ENCODE measurements at regions of chr19 and their contacts with region 1.

Region 1: DNA sequence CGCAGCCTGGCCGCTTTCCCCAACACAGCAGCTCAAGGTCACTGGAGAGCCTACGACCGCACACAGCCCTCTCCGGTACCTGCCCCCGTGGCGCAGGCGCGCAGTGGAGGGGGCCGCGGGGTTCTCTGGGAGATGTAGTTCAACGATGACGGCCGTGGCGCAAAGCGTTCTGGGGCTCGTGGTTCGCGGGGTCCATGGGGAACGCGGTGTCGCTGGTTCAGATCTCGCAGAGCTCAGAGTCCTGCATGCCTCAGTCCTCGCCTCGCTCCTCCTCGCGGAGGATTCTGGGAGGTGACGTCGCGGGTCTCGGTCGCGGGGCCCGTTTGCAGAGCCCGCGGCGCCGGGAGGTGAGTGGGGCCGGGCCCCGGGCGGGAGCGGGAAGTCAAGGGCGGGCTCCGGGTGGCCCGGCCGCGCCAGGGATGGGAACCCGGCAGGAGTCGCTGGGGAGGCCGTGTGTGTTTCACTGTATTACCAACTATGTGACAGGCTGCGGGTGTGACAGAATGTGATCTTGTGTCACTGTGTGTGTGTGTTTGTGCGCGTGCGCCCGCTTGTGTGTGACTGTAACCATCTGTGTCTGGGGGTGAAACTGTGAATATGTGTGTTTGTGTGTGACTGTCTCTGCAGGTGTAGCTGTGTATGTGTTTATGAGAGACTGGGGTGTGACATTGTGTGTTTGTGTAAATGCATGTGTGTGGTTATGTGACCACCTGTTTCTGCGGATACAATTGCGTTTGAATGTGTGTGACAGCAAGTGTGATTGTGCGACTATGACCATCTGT is at the start of gene ZNF527:
- DNase-seq: peak; percentile 97 to 100 (median 99)
- H3K4me3 ChIP-seq: peak within 1 kb of the TSS; percentile 61 to 99 (median 83)
- H3K27ac ChIP-seq: peak within 1 kb of the TSS; percentile 66 to 96 (median 89)
- H3K27me3 ChIP-seq: no peaks in the 10 kb centered on the region
- CTCF ChIP-seq: peak in 36 of 56 donors; percentile 5 to 52 (median 29)
- total RNA-seq, gene ZNF527: 8.0 to 20.0 (median 11.8) TPM

Region 2: GRCh38 chr19:36850559-36851442 is 520.3 kb before region 1 on chr19 and contains the start of gene ZNF345:
- intact Hi-C with region 1: loop called in 1 of 2 experiments (anchors 2 kb)
- DNase-seq: peak; percentile 80 to 95 (median 94)
- H3K4me3 ChIP-seq: peak within 1 kb of the TSS; percentile 63 to 99 (median 89)
- H3K27ac ChIP-seq: peak within 1 kb of the TSS; percentile 79 to 98 (median 94)
- H3K27me3 ChIP-seq: no peaks in the 10 kb centered on the region
- CTCF ChIP-seq: peak in 7 of 56 donors; percentile 5 to 17 (median 10)
- total RNA-seq, gene ZNF345: 4.2 to 23.2 (median 10.2) TPM

Region 3: GRCh38 chr19:37014456-37014855 is 356.6 kb before region 1 on chr19:
- intact Hi-C with region 1: no loop called
- DNase-seq: no peak
- H3K4me3 ChIP-seq: no peak overlapping the region
- H3K27ac ChIP-seq: no peak overlapping the region
- H3K27me3 ChIP-seq: no peaks in the 10 kb centered on the region
- CTCF ChIP-seq: no peak

Region 4: DNA sequence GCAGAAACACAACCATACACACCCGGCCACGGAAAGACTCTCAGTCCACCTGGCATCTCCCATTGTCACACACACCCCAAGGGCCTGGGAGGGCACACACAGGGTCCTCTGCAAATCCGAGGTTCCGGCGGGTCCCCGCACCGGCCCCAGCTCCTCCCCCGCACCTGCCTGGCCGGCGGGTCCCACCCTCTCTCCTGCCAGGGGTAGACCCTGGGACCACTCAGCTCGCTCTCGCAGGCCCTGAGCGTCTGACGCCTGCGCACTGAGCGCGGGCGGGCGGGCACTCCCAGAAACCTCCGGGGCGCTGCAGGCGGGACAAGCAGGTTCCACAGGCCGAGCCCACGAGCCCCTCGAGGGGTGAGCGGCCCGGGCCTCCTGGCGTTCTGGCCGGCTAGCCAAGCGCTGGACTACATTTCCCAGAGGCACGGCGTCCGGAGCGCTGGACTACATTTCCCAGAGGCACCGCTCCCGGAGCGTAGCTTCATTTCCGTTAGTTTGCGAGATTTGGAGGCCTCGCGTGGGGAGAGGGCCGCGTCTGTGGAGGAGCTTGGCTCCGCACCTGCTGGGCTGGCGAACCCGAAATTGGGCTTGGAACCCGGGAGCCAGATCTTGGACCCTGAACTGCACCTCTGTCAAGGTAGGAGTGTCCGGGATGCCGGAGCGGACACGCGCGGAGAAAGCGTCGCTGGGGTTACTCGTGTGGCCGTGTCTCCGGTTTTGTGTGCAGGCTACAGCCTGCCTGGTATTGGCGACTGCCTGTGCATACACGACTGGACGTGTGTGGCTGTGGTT is 292.9 kb before region 1 on chr19 and contains the start of gene ZNF420:
- intact Hi-C with region 1: loop called in 1 of 2 experiments (anchors 5 kb)
- DNase-seq: peak; percentile 87 to 96 (median 94)
- H3K4me3 ChIP-seq: peak within 1 kb of the TSS; percentile 65 to 99 (median 90)
- H3K27ac ChIP-seq: peak within 1 kb of the TSS; percentile 36 to 97 (median 88)
- H3K27me3 ChIP-seq: no peaks in the 10 kb centered on the region
- CTCF ChIP-seq: peak in 36 of 56 donors; percentile 5 to 61 (median 30)
- total RNA-seq, gene ZNF420: 12.8 to 34.4 (median 22.6) TPM

Region 5: DNA sequence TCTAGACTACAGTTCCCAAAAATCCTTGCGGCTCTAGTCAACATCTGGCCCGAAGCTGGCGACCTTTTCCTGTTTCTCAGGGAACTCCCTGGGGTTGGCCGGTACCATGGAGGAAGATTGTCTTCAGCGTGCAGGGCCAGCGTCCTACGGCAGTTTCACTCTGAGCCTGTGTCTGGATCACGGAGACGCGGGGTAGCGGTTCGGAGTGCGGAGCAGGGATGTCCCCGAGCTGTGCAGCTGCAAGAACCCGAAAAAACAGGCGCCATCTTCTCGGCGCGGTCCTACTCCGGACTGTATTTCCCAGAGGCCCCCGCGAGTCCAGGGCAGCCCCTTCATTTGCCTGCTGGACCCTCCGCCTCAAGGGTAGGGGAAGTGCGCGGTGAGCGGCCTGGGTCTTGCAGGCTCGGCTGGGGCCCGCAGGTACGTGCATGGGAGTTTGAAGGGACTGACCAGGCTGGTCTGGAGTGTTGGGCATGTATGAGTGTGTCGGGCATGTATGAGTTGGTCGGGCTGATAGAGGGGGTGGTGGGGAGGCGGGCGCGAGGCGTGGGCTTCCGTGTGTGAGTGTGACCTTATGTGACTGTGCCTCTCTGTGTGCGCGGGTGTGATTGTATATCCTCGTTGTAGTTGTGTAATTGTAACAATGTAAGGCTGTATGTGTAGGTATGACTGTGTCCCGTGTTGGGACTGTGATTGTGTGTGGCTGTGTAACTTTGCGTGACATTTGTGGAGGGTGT is 153.0 kb before region 1 on chr19 and contains the start of gene ZNF383:
- intact Hi-C with region 1: loop called (anchors 2 to 5 kb)
- DNase-seq: peak; percentile 83 to 93 (median 90)
- H3K4me3 ChIP-seq: peak within 1 kb of the TSS; percentile 62 to 96 (median 85)
- H3K27ac ChIP-seq: peak within 1 kb of the TSS; percentile 91 to 100 (median 98)
- H3K27me3 ChIP-seq: no peaks in the 10 kb centered on the region
- CTCF ChIP-seq: peak in 19 of 56 donors; percentile 4 to 43 (median 17)
- total RNA-seq, gene ZNF383: 9.7 to 27.7 (median 16.2) TPM

Region 6: GRCh38 chr19:37334179-37335071 is 36.6 kb before region 1 on chr19:
- intact Hi-C with region 1: loop called in 1 of 2 experiments (anchors 2 kb)
- DNase-seq: peak; percentile 96 to 98 (median 98)
- H3K4me3 ChIP-seq: peak overlapping the region; percentile 61 to 100 (median 91)
- H3K27ac ChIP-seq: peak overlapping the region in 56 of 59 donors; percentile 0 to 91 (median 76)
- H3K27me3 ChIP-seq: no peaks in the 10 kb centered on the region
- CTCF ChIP-seq: peak in 19 of 56 donors; percentile 4 to 39 (median 23)

Region 7: DNA sequence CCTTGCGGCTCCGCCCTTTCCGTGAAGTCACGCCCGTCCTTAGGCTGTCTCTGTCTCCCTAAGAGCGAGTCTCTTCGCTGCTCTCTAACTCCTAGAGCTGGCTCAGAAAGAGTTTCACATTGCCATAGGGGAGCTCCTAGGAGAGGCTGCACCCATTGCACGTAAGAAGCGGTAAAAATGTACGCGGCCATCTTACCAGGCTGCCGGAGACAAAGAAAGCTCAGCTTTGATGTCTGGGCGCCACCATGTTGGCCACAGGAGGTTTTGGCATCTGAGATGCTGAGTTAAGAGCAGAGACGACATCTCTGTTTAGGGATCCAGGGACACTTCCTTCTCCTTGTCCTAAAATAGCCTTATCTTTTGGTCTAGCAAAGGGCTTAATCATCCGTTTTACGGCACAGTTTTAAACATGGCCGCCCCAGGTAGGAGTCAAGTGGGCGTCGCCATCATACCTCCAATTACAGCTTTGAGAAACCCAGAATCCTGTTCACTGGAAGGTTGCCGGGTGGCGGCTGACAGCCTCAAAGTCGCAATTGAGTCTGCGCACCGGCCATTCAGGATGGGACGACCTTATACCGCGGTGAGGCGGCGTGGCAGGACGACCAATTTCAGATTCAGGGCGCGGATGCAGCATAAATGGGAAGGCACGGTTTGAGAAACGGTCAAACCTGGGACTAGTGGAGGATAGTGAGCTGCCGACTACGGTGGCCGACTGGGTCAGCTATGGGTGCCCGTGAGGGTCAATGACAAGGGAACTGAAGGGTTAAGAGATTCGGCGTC is 135.5 kb after region 1 on chr19 and contains the start of gene ZNF793:
- intact Hi-C with region 1: loop called in 1 of 2 experiments (anchors 2 kb)
- DNase-seq: peak; percentile 70 to 89 (median 81)
- H3K4me3 ChIP-seq: peak within 1 kb of the TSS; percentile 66 to 95 (median 84)
- H3K27ac ChIP-seq: peak within 1 kb of the TSS; percentile 89 to 99 (median 97)
- H3K27me3 ChIP-seq: no peaks in the 10 kb centered on the region
- CTCF ChIP-seq: peak in 7 of 56 donors; percentile 5 to 16 (median 13)
- total RNA-seq, gene ZNF793: 15.9 to 32.1 (median 22.9) TPM

Measured in dorsolateral prefrontal cortex (tissue), 120 donors.